ENCODE measurements at regions of chr1 and their contacts with region 1.

Region 1: DNA sequence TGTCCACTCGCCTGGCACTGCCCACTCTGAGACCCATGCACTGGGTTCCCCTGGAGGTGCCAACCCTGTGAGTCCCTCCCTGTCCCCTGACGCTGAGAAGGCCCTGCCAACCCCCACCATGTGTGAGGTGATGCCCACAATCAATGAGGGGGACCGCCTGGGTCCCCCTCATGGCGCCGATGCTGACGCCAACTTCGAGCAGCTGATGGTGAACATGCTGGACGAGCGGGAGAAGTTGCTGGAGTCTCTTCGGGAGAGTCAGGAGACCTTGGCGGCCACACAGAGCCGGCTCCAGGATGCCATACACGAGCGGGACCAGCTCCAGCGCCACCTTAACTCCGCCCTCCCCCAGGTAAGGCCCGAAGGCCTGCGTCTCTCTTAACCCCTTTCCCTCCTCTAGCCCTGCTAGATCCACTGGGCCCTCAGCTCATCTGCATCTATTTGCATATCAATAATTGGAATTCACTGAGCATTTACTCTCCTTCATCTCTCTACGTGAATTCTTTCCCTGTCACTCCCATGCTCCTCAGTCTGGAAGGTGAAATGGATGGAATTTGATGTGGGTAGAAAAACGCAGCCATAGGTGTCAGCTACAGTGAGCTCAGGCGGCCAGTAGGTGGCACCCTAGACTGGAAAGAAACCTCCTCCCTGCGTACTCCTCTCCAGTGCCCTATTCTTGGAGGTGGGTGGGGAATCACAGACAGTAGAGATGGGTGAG is 12.8 kb downstream of the PPFIA4 start:
- DNase-seq: peak; percentile 70 to 87 (median 82)
- H3K4me3 ChIP-seq: peak overlapping the region in 8 of 59 donors; percentile 6 to 27 (median 19)
- H3K27ac ChIP-seq: peak overlapping the region in 48 of 59 donors; percentile 2 to 88 (median 60)
- H3K27me3 ChIP-seq: no peaks in the 10 kb centered on the region
- CTCF ChIP-seq: peak; percentile 77 to 97 (median 92)

Region 2: DNA sequence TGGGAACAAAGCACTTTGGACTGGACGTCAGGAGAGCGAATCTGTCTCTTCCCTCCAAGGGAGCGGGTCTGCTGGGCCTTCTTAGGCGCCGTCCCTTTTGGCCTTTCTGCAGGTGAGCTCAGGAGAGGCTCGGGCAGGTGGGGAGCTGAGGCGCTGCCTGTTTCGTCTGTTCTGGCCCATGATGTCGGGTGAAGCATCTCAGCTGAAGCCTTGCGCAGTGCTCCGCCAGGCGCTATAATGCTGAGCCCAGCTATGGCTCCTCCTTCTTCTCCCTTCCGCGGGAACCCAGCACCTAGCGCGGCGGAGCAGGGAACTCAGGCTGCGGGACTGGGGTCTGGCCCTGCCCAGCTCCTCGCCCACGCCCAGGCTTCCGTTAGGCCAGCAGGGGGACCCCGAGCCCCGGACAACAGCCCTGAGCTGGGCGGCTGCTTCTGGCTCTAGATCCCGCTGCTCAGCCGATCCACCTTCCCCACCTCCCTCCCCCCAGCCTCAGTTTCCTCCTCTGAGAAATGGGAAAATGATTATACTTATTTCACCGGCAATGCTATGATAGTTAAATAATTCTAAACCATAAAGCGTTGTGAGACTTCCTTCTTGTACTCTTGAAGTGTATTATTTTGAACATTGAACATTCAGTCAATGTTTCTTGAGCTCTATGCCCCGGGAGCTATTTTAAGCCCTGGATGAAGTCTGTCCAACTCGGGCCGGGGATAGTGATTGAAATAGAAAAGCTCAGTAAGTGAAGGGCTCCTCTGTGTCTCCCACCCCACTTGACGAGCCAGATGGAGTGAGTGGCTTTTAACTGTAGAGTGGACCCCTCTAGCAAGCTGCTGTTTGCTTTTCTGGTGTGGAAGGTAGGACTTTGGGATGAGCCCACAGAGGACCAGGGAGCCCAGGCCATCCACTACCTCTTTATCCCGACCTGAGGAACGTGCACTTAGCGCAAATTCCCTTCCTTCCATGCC is 78.8 kb after region 1 on chr1:
- intact Hi-C with region 1: loop called in 1 of 2 experiments (anchors 5 kb)
- DNase-seq: peak; percentile 69 to 88 (median 78)
- H3K4me3 ChIP-seq: peak overlapping the region in 33 of 59 donors; percentile 3 to 47 (median 28)
- H3K27ac ChIP-seq: no peak overlapping the region
- H3K27me3 ChIP-seq: no peaks in the 10 kb centered on the region
- CTCF ChIP-seq: peak; percentile 50 to 99 (median 86)

Region 3: DNA sequence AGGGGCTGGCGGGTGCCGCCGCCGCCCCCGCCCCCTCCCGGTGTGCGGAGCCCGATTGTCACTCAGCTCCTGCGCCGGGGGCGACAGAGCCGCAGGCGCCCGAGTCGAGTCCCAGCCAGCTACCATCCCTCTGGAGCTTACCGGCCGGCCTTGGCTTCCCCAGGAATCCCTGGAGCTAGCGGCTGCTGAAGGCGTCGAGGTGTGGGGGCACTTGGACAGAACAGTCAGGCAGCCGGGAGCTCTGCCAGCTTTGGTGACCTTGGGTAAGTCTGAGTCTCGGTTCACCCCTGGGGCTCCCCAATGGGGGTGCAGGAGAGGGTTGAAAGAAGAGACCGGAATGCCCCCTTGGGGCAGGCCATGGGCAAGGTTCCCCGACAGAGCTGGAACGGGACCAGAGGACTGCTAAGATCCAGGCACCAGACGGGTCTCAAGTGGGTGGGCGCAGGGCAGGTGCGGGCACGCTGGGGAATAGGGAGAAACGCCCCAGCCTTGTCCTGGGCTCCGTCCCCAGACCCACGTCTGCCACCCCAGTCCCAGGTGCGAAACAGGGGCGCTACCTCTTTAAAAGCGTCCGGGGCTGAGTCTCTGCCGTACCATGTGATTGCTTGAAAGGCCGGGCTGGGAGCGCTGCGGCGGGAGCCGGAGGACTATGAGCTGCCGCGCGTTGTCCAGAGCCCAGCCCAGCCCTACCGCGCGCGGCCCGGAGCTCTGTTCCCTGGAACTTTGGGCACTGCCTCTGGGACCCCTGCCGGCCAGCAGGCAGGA is 88.8 kb after region 1 on chr1 and contains the start of gene ADORA1:
- intact Hi-C with region 1: loop called in 1 of 2 experiments (anchors 5 kb)
- DNase-seq: peak; percentile 69 to 91 (median 88)
- H3K4me3 ChIP-seq: peak within 1 kb of the TSS; percentile 48 to 93 (median 77)
- H3K27ac ChIP-seq: peak within 1 kb of the TSS; percentile 81 to 100 (median 97)
- H3K27me3 ChIP-seq: no peaks in the 10 kb centered on the region
- CTCF ChIP-seq: peak in 21 of 56 donors; percentile 4 to 40 (median 20)
- total RNA-seq, gene ADORA1: 45.1 to 109 (median 75.9) TPM

Region 4: GRCh38 chr1:203172128-203173010 is 133.3 kb after region 1 on chr1:
- intact Hi-C with region 1: loop called in 1 of 2 experiments (anchors 5 kb)
- DNase-seq: peak; percentile 56 to 79 (median 72)
- H3K4me3 ChIP-seq: no peak overlapping the region
- H3K27ac ChIP-seq: peak overlapping the region in 53 of 59 donors; percentile 7 to 71 (median 51)
- H3K27me3 ChIP-seq: no peaks in the 10 kb centered on the region
- CTCF ChIP-seq: peak; percentile 64 to 93 (median 87)

Region 5: GRCh38 chr1:203216274-203217138 is 177.5 kb after region 1 on chr1:
- intact Hi-C with region 1: loop called (anchors 1 to 2 kb)
- DNase-seq: peak in 7 of 10 donors; percentile 34 to 84 (median 62)
- H3K4me3 ChIP-seq: no peak overlapping the region
- H3K27ac ChIP-seq: peak overlapping the region in 6 of 59 donors; percentile 1 to 36 (median 15)
- H3K27me3 ChIP-seq: no peaks in the 10 kb centered on the region
- CTCF ChIP-seq: peak in 55 of 56 donors; percentile 71 to 96 (median 86)

Region 6: GRCh38 chr1:203267347-203267846 is 228.3 kb after region 1 on chr1:
- intact Hi-C with region 1: loop called (anchors 2 to 5 kb)
- DNase-seq: peak in 9 of 10 donors; percentile 60 to 83 (median 82)
- H3K4me3 ChIP-seq: peak overlapping the region; percentile 35 to 82 (median 60)
- H3K27ac ChIP-seq: peak overlapping the region in 57 of 59 donors; percentile 13 to 93 (median 77)
- H3K27me3 ChIP-seq: no peaks in the 10 kb centered on the region
- CTCF ChIP-seq: peak; percentile 86 to 99 (median 95)

Region 7: GRCh38 chr1:203340112-203340804 is 301.2 kb after region 1 on chr1:
- intact Hi-C with region 1: loop called in 1 of 2 experiments (anchors 5 kb)
- DNase-seq: peak; percentile 39 to 83 (median 70)
- H3K4me3 ChIP-seq: no peak overlapping the region
- H3K27ac ChIP-seq: peak overlapping the region in 48 of 59 donors; percentile 0 to 80 (median 62)
- H3K27me3 ChIP-seq: no peaks in the 10 kb centered on the region
- CTCF ChIP-seq: peak; percentile 84 to 99 (median 96)